Psoas muscle (tissue), 8 donors: ENCODE measurements at regions of chr9 and their contacts with region 1.

Region 1: DNA sequence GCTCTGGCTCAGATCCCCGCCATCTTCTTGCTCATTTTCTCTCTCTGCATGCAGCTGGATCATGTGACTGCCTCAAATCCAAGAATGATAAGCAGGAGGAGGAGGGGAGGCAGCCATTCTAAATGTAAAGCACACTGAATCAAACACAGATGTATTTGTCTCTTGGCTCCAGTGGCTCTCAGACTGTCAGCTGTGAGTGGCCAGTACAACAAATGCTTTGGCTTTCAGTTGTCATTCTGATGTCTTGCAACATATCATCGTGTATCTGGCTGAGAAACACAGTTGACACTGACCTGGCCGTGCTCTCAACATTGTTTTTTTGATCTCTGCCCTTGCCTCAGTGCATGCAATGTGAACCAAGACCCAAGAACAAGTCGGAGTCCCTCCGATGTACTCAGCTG is 233.1 kb downstream of the ADAMTSL1 start:
- DNase-seq: no peak
- ATAC-seq: peak; percentile 76 to 94 (median 84)
- H3K4me3 ChIP-seq: no peak overlapping the region
- H3K27ac ChIP-seq: peak overlapping the region; percentile 36
- H3K4me1 ChIP-seq: peaks cover 11% of the 10 kb centered on the region
- H3K27me3 ChIP-seq: no peaks in the 10 kb centered on the region
- CTCF ChIP-seq: no peak

Region 2: GRCh38 chr9:18834740-18835361 is 127.8 kb after region 1 on chr9:
- intact Hi-C with region 1: loop called in 1 of 2 experiments (anchors 10 kb)
- DNase-seq: no peak
- ATAC-seq: no peak
- H3K4me3 ChIP-seq: no peak overlapping the region
- H3K27ac ChIP-seq: no peak overlapping the region
- H3K4me1 ChIP-seq: no peaks in the 10 kb centered on the region
- H3K27me3 ChIP-seq: no peaks in the 10 kb centered on the region
- CTCF ChIP-seq: no peak